Mammary epithelial cell (primary cell): ENCODE measurements at regions of chr10 and their contacts with region 1.

Region 1: GRCh38 chr10:102503281-102504220 is at the start of gene SUFU:
- DNase-seq: peak; percentile 96
- H3K4me3 ChIP-seq: peak within 1 kb of the TSS; percentile 72 to 78 (median 78)
- H3K27ac ChIP-seq: peak within 1 kb of the TSS; percentile 40
- H3K4me1 ChIP-seq: peaks cover 12% of the 10 kb centered on the region
- H3K27me3 ChIP-seq: no peaks in the 10 kb centered on the region
- CTCF ChIP-seq: peak; percentile 89 to 97
- total RNA-seq, gene SUFU: 2.5 to 9.2 TPM

Region 2: GRCh38 chr10:102450194-102450938 is 53.2 kb before region 1 on chr10:
- CTCF ChIA-PET with region 1: no interaction called
- dilution Hi-C with region 1: no loop called
- in situ Hi-C with region 1: no loop called
- intact Hi-C with region 1: loop called (anchors 2 kb)
- DNase-seq: peak; percentile 86
- H3K4me3 ChIP-seq: peak overlapping the region; percentile 44 to 95 (median 63)
- H3K27ac ChIP-seq: peak overlapping the region; percentile 28
- H3K4me1 ChIP-seq: peaks cover 20% of the 10 kb centered on the region
- H3K27me3 ChIP-seq: no peaks in the 10 kb centered on the region
- CTCF ChIP-seq: no peak

Region 3: DNA sequence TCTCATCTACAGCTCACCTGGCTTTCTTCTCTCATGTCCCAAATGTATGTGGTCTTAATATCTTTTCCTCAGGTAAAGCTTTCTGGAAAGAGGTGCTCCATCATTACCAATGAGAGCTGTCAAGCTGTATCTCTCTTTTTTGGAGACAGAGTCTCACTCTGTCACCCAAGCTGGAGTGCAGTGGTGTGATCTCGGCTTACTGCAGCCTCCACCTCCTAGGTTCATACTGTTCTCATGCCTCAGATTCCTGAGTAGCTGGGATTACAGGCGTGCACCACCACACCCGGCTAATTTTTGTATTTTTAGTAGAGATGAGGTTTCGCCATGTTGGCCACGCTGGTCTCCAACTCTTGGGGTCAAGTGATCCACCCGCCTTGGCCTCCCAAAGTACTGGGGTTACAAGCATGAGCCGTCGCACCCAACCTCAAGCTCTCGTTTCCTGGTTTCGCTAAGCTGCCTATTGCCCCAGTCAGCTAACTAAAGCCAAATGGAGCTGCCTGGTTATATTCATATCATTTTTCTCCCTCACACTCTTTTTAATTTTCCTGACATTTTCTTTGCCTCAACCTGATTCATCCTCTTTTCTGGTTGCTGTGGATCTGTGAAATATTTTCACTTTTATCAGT is 60.8 kb after region 1 on chr10:
- CTCF ChIA-PET with region 1: no interaction called
- dilution Hi-C with region 1: loop called (anchors 5 kb)
- in situ Hi-C with region 1: no loop called
- intact Hi-C with region 1: no loop called
- DNase-seq: no peak
- H3K4me3 ChIP-seq: no peak overlapping the region
- H3K27ac ChIP-seq: no peak overlapping the region
- H3K4me1 ChIP-seq: no peaks in the 10 kb centered on the region
- H3K27me3 ChIP-seq: no peaks in the 10 kb centered on the region
- CTCF ChIP-seq: no peak

Region 4: DNA sequence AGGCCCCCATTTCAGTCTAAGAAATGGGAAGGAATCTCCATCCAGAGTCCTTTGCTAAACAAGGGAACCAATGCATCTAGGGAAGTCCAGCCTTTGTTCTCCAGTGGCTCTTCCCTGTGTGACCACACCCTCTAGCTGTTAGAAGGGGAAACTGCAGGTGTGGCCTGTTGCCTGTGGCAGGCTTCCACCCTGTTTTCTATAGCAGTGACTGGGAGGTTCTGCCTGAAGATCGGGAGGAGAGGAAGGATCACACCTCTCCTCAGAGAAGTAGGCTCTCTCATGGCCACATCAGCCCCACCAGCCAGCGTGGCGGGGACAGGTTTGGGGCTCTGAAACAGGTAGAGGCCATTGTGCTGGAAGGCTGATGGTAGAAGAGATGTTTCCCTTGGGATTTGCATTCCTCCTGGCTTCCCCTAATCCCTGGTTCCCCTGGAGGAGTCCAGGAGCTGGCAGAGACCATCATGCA is 93.0 kb after region 1 on chr10:
- CTCF ChIA-PET with region 1: interaction called, 10 read pairs
- dilution Hi-C with region 1: loop called (anchors 5 kb)
- in situ Hi-C with region 1: no loop called
- intact Hi-C with region 1: loop called (anchors 1 kb)
- DNase-seq: peak; percentile 57
- H3K4me3 ChIP-seq: no peak overlapping the region
- H3K27ac ChIP-seq: no peak overlapping the region
- H3K4me1 ChIP-seq: peaks cover 11% of the 10 kb centered on the region
- H3K27me3 ChIP-seq: no peaks in the 10 kb centered on the region
- CTCF ChIP-seq: peak; percentile 90

Region 5: GRCh38 chr10:102713814-102714620 is 210.5 kb after region 1 on chr10 and contains the start of gene ARL3:
- CTCF ChIA-PET with region 1: interaction called, 5 read pairs
- dilution Hi-C with region 1: no loop called
- in situ Hi-C with region 1: no loop called
- intact Hi-C with region 1: loop called (anchors 5 kb)
- DNase-seq: peak; percentile 99
- H3K4me3 ChIP-seq: peak within 1 kb of the TSS; percentile 84 to 95 (median 89)
- H3K27ac ChIP-seq: peak within 1 kb of the TSS; percentile 82
- H3K4me1 ChIP-seq: peaks cover 15% of the 10 kb centered on the region
- H3K27me3 ChIP-seq: no peaks in the 10 kb centered on the region
- CTCF ChIP-seq: peak; percentile 48 to 57
- total RNA-seq, gene ARL3: 2.3 to 8.7 TPM